OCI-LY7 (cell line): ENCODE measurements at regions of chr3 and their contacts with region 1.

Region 1: DNA sequence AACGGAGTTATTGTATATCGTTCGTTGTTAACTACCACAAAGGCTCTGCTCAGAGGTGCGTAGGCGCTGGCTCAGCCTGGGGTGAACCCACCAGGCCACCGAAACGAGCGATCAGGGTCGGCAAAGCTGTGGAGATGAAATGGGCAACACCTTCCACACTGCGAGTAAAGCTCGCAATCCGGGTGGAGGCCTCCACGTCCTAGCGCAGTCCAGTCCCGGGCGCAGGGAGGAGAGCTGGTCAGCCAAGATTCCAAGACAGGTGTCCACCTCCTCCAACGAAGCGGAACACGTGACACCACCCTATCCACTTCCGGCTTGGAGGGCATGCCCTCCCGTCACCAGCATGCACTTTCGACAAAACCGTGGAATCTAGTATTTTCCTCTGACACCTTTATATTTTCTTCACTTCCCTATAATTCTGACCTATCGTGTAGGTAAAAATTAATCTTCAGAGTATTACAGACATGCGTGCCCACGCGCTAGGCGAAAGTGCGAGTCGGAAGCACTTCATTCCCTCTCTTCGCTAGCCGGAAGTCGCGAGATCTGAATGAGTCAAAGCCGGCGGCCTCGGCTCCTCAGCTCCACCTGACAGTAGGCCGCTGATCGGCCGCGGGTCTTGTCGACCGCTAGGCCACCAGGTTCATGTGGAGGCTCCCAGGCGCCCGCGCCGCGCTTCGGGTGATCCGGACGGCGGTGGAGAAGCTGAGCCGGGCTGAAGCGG is at the start of gene PDE12:
- DNase-seq: peak; percentile 95
- H3K4me3 ChIP-seq: peak within 1 kb of the TSS; percentile 78
- H3K27ac ChIP-seq: peak within 1 kb of the TSS; percentile 77
- H3K4me1 ChIP-seq: peaks cover 31% of the 10 kb centered on the region
- CTCF ChIP-seq: no peak
- total RNA-seq, gene PDE12: 15.2 and 19.3 TPM in 2 replicates

Region 2: DNA sequence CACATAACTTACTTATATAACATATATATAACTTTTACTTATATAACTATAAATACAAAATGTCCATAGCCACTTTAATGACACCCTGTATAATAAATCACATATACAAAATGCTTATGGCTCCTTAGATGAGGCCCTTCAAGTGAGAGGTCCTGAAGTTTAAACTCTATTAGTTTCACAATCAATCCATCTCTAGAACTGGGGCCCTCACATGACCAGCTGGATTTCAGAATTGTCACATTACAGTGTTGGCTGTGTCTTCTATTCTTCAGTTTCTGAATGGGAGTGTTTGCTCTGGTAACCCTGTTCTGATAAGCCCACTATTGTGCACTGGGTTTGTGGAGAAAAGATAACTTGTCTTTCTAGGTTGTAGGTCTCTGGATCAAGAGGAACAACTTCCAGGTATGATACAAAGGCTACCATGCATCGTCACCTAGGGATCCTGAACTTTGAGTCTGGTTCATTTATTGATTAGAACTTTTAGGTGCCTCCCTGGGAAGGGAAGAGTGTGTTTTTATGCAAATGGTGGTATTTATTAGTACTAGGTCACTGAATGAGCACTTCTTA is 119.6 kb before region 1 on chr3:
- CTCF ChIA-PET with region 1: no interaction called
- POLR2A ChIA-PET with region 1: no interaction called
- intact Hi-C with region 1: no loop called
- DNase-seq: no peak
- H3K4me3 ChIP-seq: no peak overlapping the region
- H3K27ac ChIP-seq: no peak overlapping the region
- H3K4me1 ChIP-seq: no peaks in the 10 kb centered on the region
- CTCF ChIP-seq: no peak

Region 3: GRCh38 chr3:57446318-57446841 is 109.5 kb before region 1 on chr3:
- CTCF ChIA-PET with region 1: no interaction called
- POLR2A ChIA-PET with region 1: no interaction called
- intact Hi-C with region 1: no loop called
- DNase-seq: no peak
- H3K4me3 ChIP-seq: no peak overlapping the region
- H3K27ac ChIP-seq: no peak overlapping the region
- H3K4me1 ChIP-seq: no peaks in the 10 kb centered on the region
- CTCF ChIP-seq: no peak

Region 4: DNA sequence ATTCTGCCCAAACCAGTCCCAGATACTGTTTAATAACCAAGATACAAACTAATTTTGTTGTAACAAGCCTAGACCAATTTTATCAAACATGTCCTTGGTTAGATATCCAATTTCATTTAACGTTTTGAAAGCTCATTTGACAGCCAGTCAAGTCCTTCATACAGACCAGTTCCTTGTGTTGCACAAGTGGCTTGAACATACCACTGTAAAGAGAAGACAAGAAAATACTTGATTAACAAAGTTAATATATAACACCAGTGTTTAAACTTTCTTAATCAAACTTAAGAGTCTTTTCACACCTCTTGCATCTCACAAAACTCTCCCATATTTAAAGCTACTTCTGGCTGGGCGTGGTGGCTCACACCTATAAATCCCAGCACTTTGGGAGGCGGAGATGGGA is 16.2 kb after region 1 on chr3:
- CTCF ChIA-PET with region 1: no interaction called
- POLR2A ChIA-PET with region 1: no interaction called
- intact Hi-C with region 1: no loop called
- DNase-seq: no peak
- H3K4me3 ChIP-seq: no peak overlapping the region
- H3K27ac ChIP-seq: no peak overlapping the region
- H3K4me1 ChIP-seq: no peaks in the 10 kb centered on the region
- CTCF ChIP-seq: no peak

Region 5: GRCh38 chr3:57675530-57675929 is 119.6 kb after region 1 on chr3:
- CTCF ChIA-PET with region 1: no interaction called
- POLR2A ChIA-PET with region 1: interaction called, 7 read pairs
- intact Hi-C with region 1: loop called (anchors 5 kb)
- DNase-seq: no peak
- H3K4me3 ChIP-seq: no peak overlapping the region
- H3K27ac ChIP-seq: no peak overlapping the region
- H3K4me1 ChIP-seq: peaks cover 46% of the 10 kb centered on the region
- CTCF ChIP-seq: no peak

Region 6: DNA sequence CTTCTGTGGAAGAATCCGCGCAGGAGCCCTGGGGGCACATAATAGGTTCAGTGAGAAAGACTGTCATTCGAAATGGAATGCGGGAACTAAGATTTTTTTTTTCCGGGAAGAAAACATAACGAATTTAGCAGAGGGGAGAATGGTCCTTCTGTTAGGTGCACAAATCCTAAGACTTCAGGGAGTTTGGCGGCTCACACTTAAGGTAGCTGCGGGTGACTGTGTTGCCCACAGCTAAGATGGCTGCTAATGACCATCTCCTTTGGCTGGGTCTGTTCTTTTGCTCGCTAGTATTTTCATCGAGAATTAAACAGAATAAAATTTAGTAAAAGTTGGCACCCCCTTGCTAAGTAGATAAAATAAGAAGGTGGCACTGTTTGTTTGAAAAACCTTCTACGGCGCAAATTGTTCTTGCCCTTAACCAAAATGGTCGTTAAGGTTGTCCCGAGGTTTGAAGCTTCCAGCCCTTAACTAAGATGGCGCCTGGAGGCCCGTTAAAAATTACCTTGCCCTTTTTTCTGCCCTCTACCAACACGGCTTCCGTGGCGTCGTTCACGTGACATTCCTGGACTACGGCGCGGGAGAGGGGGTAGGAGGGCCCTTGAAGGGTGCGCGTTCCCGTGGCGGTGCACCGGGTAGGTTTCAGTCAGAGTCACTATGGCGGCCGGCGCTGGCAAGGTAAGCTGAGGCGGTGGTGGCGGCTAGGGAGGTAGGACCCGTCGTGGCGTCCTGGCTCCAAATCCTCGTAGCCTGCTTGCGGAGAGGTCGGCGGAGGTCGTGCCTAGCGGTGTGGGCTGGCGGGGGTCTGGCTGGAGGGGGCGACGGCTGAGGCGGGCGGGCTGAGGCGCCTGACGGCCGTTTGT is 200.0 kb after region 1 on chr3 and contains the start of gene SLMAP:
- CTCF ChIA-PET with region 1: no interaction called
- POLR2A ChIA-PET with region 1: no interaction called
- intact Hi-C with region 1: loop called (anchors 5 kb)
- DNase-seq: peak; percentile 97
- H3K4me3 ChIP-seq: peak within 1 kb of the TSS; percentile 80
- H3K27ac ChIP-seq: peak within 1 kb of the TSS; percentile 64
- H3K4me1 ChIP-seq: peaks cover 35% of the 10 kb centered on the region
- CTCF ChIP-seq: 0 out of 2 replicates have a peak, but pooled peaks have one; percentile 2
- total RNA-seq, gene SLMAP: 39.1 and 41.6 TPM in 2 replicates